Heart left ventricle (tissue), 16 donors: ENCODE measurements at regions of chr19 and their contacts with region 1.

Region 1: GRCh38 chr19:18203863-18204393 is at the start of gene RAB3A:
- DNase-seq: peak; percentile 100
- ATAC-seq: peak; percentile 94 to 96 (median 94)
- H3K4me3 ChIP-seq: peak within 1 kb of the TSS; percentile 56 to 91 (median 76)
- H3K27ac ChIP-seq: peak within 1 kb of the TSS; percentile 96 to 100 (median 98)
- H3K4me1 ChIP-seq: peaks cover 0 to 31% (median 22%) of the 10 kb centered on the region in 12 donors
- H3K27me3 ChIP-seq: peaks cover 0 to 4% (median 0%) of the 10 kb centered on the region in 9 donors
- CTCF ChIP-seq: peak in 3 of 12 donors; percentile 6 to 18 (median 14)
- POLR2A ChIP-seq: peak; percentile 51 to 60
- total RNA-seq, gene RAB3A: 6.9 to 39.2 (median 31.5) TPM

Region 2: DNA sequence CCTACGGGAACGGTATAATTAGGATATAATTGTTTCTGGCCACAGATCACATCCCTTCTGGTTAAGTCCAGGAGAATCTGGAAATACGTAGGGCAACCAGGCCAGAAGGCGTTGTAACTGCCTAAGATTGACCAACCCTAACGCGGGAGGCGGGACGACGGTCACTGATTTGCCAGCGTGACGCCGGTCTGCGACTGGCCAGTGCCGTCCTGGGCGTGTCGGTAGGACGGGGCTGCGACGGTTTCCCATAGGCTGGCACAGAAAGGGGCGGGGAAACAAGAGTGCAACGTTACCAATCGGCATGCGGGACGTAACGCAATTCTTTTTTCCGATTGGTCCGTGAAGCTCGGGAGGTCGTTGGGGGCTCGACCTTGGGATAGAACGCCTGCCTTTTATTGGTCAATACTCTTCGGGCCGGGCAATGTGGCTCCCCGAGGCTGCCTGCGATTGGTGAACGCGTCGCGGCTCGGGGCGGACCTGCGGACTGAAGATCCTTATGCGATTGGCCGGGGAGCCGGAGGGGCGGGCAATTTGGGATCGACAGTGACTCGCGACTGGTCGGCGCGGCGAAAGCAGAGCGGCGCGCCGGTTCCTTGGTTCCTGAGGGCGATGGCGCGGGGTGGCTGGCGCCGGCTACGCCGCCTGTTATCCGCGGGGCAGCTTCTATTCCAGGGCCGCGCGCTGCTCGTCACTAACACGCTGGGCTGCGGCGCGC is 11.1 kb before region 1 on chr19 and contains the start of gene MPV17L2:
- intact Hi-C with region 1: loop called in 2 of 10 experiments (anchors 1 kb)
- DNase-seq: peak; percentile 100
- ATAC-seq: peak; percentile 94 to 99 (median 96)
- H3K4me3 ChIP-seq: peak within 1 kb of the TSS; percentile 40 to 99 (median 84)
- H3K27ac ChIP-seq: peak within 1 kb of the TSS; percentile 78 to 99 (median 94)
- H3K4me1 ChIP-seq: peaks cover 0 to 25% (median 14%) of the 10 kb centered on the region in 12 donors
- H3K27me3 ChIP-seq: no peaks in the 10 kb centered on the region
- CTCF ChIP-seq: no peak
- POLR2A ChIP-seq: peak; percentile 82 to 89
- total RNA-seq, gene MPV17L2: 10.6 to 37.4 (median 14.8) TPM

Region 3: DNA sequence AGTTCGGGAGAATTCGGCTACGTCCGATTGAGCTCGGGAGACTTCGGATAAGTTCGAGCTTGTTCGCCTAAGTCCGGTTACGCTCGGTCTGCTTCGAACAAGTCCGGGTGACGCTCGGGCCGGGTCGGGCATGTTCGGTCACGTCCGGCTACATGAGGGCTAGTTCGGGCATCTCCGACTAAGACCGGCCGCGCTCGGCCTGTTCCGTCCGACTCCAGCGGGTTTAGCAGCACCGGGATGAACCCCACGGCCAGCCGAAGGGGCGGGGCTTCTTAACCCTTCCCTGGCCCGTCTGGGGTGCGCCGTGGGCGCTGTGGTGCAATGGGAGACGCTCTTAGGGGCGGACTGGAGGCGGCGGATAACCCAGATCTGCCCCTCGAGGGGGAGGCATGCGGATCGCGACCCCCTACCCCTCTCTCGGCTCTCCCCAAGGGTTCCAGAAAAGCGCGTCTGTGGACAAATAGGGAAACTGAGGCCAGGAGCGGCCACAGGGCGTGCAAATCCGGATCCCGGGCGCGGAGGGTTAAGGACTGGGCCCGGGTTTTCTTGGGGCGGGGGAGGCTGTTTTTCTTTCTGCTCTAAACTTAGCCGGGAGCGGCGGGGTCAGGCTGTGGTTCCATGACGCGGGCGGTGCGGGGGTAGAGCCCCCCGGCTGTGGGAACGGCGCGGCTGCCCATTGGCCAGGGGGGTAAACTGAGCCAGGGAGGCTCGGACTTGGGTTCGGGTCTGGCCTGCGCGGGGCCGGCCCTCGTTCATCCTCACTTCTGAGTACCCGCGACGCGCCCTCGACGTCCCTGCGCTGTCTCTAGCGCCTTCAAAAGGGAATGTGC is 20.8 kb after region 1 on chr19:
- intact Hi-C with region 1: loop called in 1 of 10 experiments (anchors 2 kb)
- DNase-seq: peak; percentile 97 to 99 (median 98)
- ATAC-seq: peak; percentile 98 to 99 (median 98)
- H3K4me3 ChIP-seq: peak overlapping the region; percentile 9 to 64 (median 50)
- H3K27ac ChIP-seq: peak overlapping the region; percentile 36 to 93 (median 69)
- H3K4me1 ChIP-seq: peaks cover 0 to 44% (median 22%) of the 10 kb centered on the region in 12 donors
- H3K27me3 ChIP-seq: peaks cover 18 to 67% (median 24%) of the 10 kb centered on the region in 9 donors
- CTCF ChIP-seq: no peak
- POLR2A ChIP-seq: peak in 1 of 2 donors; percentile 7

Region 4: GRCh38 chr19:18251587-18252369 is 47.9 kb after region 1 on chr19:
- intact Hi-C with region 1: loop called in 9 of 10 experiments (anchors 1 to 5 kb)
- DNase-seq: peak in 4 of 5 donors; percentile 46 to 72 (median 62)
- ATAC-seq: peak; percentile 55 to 84 (median 75)
- H3K4me3 ChIP-seq: no peak overlapping the region
- H3K27ac ChIP-seq: no peak overlapping the region
- H3K4me1 ChIP-seq: peaks cover 0 to 10% (median 0%) of the 10 kb centered on the region in 12 donors
- H3K27me3 ChIP-seq: peaks cover 0 to 12% (median 4%) of the 10 kb centered on the region in 9 donors
- CTCF ChIP-seq: peak; percentile 84 to 95 (median 92)
- POLR2A ChIP-seq: no peak

Region 5: DNA sequence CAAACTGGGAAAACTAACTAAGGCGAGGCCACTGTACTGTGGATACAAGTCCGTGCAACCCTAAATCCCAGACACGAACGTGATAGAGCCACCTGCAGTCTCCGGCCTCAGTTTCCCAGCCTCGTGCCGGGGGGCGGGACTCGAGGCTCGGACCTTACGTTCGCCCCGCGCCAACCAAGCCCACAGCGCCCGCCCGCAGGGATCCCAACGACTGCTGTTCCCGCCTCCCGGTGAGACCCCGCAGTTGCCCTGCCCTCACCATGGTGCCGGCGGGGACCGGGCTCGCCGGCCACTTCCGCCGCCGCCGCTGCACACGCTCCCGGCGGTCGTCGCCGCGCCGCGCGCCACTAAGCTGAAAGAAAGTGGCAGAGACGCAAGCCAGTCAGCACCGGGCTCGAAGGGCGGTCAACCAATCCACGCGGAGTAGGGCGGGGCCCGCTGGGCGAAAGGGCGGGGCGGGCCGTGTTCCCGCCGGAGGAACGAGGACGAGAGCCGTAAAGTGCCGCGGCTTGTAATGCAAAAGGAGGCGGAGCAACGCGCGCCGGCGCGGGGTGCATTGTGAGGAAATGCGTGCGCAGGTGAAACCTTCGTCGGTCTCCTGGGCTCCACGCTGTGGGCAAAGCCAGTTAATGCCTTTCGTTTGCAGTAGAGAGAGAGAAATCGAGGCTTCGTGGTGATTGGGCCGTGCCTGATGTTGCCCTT is 119.0 kb after region 1 on chr19 and contains the start of gene LSM4:
- intact Hi-C with region 1: loop called in 8 of 10 experiments (anchors 2 to 10 kb)
- DNase-seq: peak; percentile 98 to 99 (median 99)
- ATAC-seq: peak; percentile 96 to 98 (median 96)
- H3K4me3 ChIP-seq: peak within 1 kb of the TSS; percentile 25 to 91 (median 81)
- H3K27ac ChIP-seq: peak within 1 kb of the TSS; percentile 62 to 98 (median 90)
- H3K4me1 ChIP-seq: peaks cover 2 to 60% (median 46%) of the 10 kb centered on the region in 12 donors
- H3K27me3 ChIP-seq: no peaks in the 10 kb centered on the region
- CTCF ChIP-seq: peak in 6 of 12 donors; percentile 5 to 38 (median 18)
- POLR2A ChIP-seq: peak; percentile 22 to 82
- total RNA-seq, gene LSM4: 65.8 to 167 (median 101) TPM

Region 6: DNA sequence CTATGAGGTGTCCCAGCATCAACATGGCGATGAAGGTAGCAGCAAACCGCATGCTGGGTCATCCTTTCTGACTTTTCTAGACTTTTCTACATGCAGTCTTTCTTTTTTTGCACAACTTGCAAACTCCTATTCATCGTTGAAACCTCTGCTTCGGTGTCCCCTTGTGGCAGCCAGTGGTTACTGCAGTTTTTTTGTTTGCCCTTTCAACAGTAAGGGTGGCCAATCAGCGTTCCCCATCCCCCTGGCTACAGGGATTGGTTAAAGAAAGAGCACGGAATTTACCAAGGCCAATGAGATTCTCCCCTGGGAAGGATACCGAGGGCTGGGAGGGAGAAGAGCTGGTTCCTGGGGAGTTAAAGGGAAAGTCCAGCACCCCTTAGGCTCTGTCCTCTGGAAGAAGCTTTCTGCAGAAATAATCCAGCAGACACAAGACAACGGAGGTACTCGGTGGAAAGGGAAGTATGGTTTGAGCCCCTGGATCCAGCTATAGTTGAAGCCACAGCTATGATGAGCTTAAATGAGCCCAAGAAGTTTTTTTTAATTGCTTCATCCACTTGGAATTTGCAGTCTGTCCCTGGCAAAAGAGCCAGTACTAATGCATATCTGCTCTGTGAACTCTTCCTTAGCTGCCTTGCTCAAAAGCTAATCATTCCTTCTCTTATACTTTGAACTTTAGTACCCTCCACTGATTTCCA is 124.6 kb after region 1 on chr19:
- intact Hi-C with region 1: loop called in 8 of 10 experiments (anchors 2 to 10 kb)
- DNase-seq: peak; percentile 91 to 95 (median 94)
- ATAC-seq: peak; percentile 98 to 99 (median 98)
- H3K4me3 ChIP-seq: peak overlapping the region in 10 of 12 donors; percentile 16 to 50 (median 46)
- H3K27ac ChIP-seq: peak overlapping the region; percentile 33 to 84 (median 75)
- H3K4me1 ChIP-seq: peaks cover 3 to 25% (median 15%) of the 10 kb centered on the region in 12 donors
- H3K27me3 ChIP-seq: no peaks in the 10 kb centered on the region
- CTCF ChIP-seq: peak; percentile 89 to 98 (median 94)
- POLR2A ChIP-seq: peak; percentile 85 to 92

Region 7: GRCh38 chr19:18419195-18419698 is 215.3 kb after region 1 on chr19 and contains the start of gene SSBP4:
- intact Hi-C with region 1: loop called in 5 of 10 experiments (anchors 5 to 10 kb)
- DNase-seq: peak; percentile 74 to 88 (median 84)
- ATAC-seq: peak in 2 of 4 donors; percentile 10 to 22
- H3K4me3 ChIP-seq: peak within 1 kb of the TSS; percentile 52 to 99 (median 80)
- H3K27ac ChIP-seq: peak within 1 kb of the TSS; percentile 89 to 100 (median 95)
- H3K4me1 ChIP-seq: peaks cover 8 to 90% (median 69%) of the 10 kb centered on the region in 12 donors
- H3K27me3 ChIP-seq: peaks cover 0 to 22% (median 0%) of the 10 kb centered on the region in 9 donors
- CTCF ChIP-seq: peak in 8 of 12 donors; percentile 14 to 69 (median 45)
- POLR2A ChIP-seq: peak in 1 of 2 donors; percentile 50
- total RNA-seq, gene SSBP4: 23.5 to 89.8 (median 29.4) TPM